ENCODE measurements at regions of chr4 and their contacts with region 1.

Region 1: GRCh38 chr4:101439926-101440325 is 92.6 kb upstream of the PPP3CA start:
- DNase-seq: no peak
- H3K4me3 ChIP-seq: no peak overlapping the region
- H3K27ac ChIP-seq: no peak overlapping the region
- H3K4me1 ChIP-seq: no peaks in the 10 kb centered on the region
- H3K27me3 ChIP-seq: no peaks in the 10 kb centered on the region
- CTCF ChIP-seq: no peak
- POLR2A ChIP-seq: no peak

Region 2: DNA sequence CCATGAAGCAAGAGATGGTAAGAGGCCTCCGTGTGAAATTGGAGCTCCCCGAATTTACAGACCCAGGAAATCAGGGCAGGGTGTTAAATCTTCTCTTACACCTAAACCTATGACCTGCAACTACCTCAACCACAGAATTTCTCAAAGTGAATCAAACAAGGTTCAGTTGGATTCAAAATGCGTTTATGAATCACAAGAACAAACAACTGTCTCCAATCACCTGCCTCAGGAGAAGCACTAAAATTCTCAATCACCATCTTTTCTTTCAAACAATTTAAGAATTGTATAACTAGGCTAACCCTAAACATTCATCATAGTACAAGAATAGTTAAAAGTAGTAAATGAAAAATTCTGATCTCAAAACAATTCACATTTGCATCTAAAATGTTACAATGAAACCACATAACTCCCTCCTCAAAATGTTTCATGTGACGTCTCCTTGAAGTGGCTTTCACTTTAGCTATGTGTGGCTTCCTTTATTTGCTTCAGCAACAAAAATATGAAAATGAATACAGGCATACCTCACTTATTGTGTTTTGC is 111.8 kb before region 1 on chr4:
- CTCF ChIA-PET with region 1: no interaction called
- POLR2A ChIA-PET with region 1: no interaction called
- dilution Hi-C with region 1: no loop called
- intact Hi-C with region 1: loop called (anchors 1 kb)
- DNase-seq: no peak
- H3K4me3 ChIP-seq: no peak overlapping the region
- H3K27ac ChIP-seq: no peak overlapping the region
- H3K4me1 ChIP-seq: no peaks in the 10 kb centered on the region
- H3K27me3 ChIP-seq: no peaks in the 10 kb centered on the region
- CTCF ChIP-seq: no peak
- POLR2A ChIP-seq: no peak

Region 3: DNA sequence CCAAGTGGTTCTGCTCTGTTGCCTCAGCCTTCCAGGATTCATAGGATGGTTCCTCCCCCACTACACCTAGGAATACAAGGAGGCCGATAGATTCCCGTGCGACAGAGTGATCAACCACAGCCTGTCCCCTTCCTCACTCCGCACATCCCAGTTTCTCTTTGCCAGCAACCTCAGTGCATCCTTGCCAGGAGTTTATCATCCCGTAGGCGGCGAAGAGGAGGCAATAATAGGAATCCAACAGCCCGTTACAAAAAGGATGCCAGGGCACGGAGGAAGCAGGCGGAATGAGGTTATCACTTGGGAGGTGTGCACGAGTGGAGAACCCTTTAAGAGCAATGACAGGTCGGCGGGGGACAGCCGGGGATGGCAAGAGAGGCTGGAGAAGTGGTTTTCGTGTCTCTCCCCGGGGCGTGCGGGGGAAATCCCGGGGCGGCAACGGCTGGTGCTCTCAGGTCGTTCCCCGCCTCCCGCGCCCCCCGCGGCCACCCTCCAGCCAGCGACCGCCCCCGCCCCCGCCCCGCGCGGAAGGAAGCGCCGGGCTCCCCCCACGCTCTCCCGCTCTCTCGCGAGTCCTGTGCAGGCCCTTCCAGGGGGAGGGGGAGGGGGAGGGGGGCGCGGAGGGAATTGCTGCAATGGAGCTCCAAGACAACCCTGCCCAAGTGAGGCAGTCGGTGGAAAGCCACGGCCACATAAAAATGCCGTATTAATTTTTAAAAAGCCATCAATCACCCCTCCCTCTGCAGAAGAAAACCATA is 94.2 kb before region 1 on chr4:
- CTCF ChIA-PET with region 1: no interaction called
- POLR2A ChIA-PET with region 1: no interaction called
- dilution Hi-C with region 1: no loop called
- intact Hi-C with region 1: no loop called
- DNase-seq: peak; percentile 50
- H3K4me3 ChIP-seq: peak overlapping the region; percentile 35 to 97 (median 80)
- H3K27ac ChIP-seq: no peak overlapping the region
- H3K4me1 ChIP-seq: peaks cover 15% of the 10 kb centered on the region
- H3K27me3 ChIP-seq: no peaks in the 10 kb centered on the region
- CTCF ChIP-seq: no peak
- POLR2A ChIP-seq: no peak

Measured in endothelial cell of umbilical vein (primary cell).